ENCODE measurements at regions of chr1 and their contacts with region 1.

Region 1: DNA sequence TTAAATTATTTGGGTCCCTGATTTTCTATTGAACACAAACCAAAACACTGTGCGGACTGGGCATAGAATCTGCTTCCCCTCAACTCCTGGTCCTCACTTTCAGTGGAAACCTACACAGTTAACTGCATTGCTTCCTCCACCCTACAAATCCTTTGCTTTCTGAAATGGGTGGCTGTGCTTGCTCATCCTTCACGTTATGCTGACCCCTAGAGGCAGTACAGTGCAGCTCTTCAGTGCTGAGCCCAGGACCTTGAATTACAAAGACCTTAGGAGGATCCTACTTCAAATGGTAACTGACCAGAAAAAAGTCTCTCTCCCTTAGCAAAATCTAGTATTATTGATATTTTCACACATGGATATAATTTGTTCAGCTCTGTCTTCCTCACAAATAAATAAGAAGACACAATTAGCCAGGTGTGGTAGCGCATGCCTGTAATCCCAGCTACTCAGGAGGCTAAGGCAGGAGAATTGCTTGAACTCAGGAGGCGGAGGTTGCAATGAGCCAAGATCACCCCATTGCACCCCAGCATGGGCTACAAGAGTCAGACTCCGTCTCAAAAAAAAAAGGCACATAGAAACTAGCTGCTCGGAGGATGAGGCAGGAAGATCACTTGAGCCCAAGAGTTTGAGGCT is 63.4 kb upstream of the L1TD1 start:
- DNase-seq: peak; percentile 57
- ATAC-seq: peak; percentile 97
- H3K4me3 ChIP-seq: no peak overlapping the region
- H3K27ac ChIP-seq: no peak overlapping the region
- H3K4me1 ChIP-seq: no peaks in the 10 kb centered on the region
- H3K27me3 ChIP-seq: no peaks in the 10 kb centered on the region
- CTCF ChIP-seq: peak; percentile 95

Region 2: GRCh38 chr1:62082456-62083363 is 48.5 kb before region 1 on chr1:
- CTCF ChIA-PET with region 1: interaction called, 11 read pairs
- POLR2A ChIA-PET with region 1: no interaction called
- in situ Hi-C with region 1: no loop called
- intact Hi-C with region 1: loop called (anchors 2 kb)
- DNase-seq: peak; percentile 36
- ATAC-seq: peak; percentile 97
- H3K4me3 ChIP-seq: no peak overlapping the region
- H3K27ac ChIP-seq: no peak overlapping the region
- H3K4me1 ChIP-seq: no peaks in the 10 kb centered on the region
- H3K27me3 ChIP-seq: no peaks in the 10 kb centered on the region
- CTCF ChIP-seq: peak; percentile 97

Region 3: DNA sequence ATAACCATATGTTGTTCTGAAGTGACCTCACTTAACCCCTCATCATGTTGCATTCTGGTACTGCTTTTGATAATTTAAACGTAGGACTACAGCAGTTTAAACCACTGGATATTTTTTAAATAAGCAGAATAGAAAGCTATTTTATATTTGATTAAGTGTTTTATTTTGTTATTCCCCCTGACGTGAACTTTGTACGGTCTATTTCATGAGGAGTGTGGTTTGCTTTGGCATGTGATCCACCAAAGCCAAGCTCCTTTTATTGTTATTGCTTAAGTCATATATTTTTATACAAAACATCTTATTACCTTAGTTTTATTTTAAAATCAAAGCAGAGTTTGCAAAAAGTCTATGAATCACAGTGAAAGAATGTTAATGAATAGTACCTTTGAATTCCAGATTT is 37.9 kb before region 1 on chr1:
- CTCF ChIA-PET with region 1: no interaction called
- POLR2A ChIA-PET with region 1: no interaction called
- in situ Hi-C with region 1: no loop called
- intact Hi-C with region 1: no loop called
- DNase-seq: no peak
- ATAC-seq: no peak
- H3K4me3 ChIP-seq: no peak overlapping the region
- H3K27ac ChIP-seq: no peak overlapping the region
- H3K4me1 ChIP-seq: no peaks in the 10 kb centered on the region
- H3K27me3 ChIP-seq: no peaks in the 10 kb centered on the region
- CTCF ChIP-seq: no peak

Region 4: GRCh38 chr1:62144238-62144831 is 13.1 kb after region 1 on chr1:
- CTCF ChIA-PET with region 1: interaction called, 21 read pairs
- POLR2A ChIA-PET with region 1: no interaction called
- in situ Hi-C with region 1: no loop called
- intact Hi-C with region 1: no loop called
- DNase-seq: peak; percentile 51
- ATAC-seq: peak; percentile 78; the same call in 1 of the 2 replicates
- H3K4me3 ChIP-seq: no peak overlapping the region
- H3K27ac ChIP-seq: no peak overlapping the region
- H3K4me1 ChIP-seq: no peaks in the 10 kb centered on the region
- H3K27me3 ChIP-seq: no peaks in the 10 kb centered on the region
- CTCF ChIP-seq: peak; percentile 84

Region 5: DNA sequence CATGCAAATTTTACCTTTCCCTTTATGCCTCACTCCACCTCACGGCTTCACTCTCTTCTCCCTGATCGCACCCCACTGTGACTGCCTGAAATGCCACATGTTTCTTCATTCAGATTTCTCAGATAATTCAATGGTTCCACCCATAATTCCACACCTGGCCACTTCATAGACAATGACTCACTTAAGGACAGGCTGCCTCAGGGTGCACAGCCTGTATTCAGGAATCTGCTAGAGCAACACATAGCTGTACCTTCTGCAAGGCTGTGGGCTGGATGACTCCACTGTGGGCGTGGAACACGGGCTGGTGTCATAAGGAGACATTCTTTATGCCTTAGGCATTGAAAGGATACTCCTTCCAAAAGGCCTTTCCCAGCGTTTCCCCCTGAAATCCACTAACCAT is 99.5 kb after region 1 on chr1:
- CTCF ChIA-PET with region 1: interaction called, 13 read pairs
- POLR2A ChIA-PET with region 1: no interaction called
- in situ Hi-C with region 1: no loop called
- intact Hi-C with region 1: no loop called
- DNase-seq: no peak
- ATAC-seq: no peak
- H3K4me3 ChIP-seq: no peak overlapping the region
- H3K27ac ChIP-seq: no peak overlapping the region
- H3K4me1 ChIP-seq: no peaks in the 10 kb centered on the region
- H3K27me3 ChIP-seq: no peaks in the 10 kb centered on the region
- CTCF ChIP-seq: no peak